Mammary epithelial cell (primary cell): ENCODE measurements at regions of chr10 and their contacts with region 1.

Region 1: GRCh38 chr10:6445501-6446316 is 134.4 kb downstream of the PRKCQ start:
- DNase-seq: peak; percentile 36
- H3K4me3 ChIP-seq: no peak overlapping the region
- H3K27ac ChIP-seq: no peak overlapping the region
- H3K4me1 ChIP-seq: no peaks in the 10 kb centered on the region
- H3K27me3 ChIP-seq: no peaks in the 10 kb centered on the region
- CTCF ChIP-seq: peak; percentile 55 to 61

Region 2: GRCh38 chr10:6493521-6494441 is 48.1 kb after region 1 on chr10:
- CTCF ChIA-PET with region 1: no interaction called
- dilution Hi-C with region 1: no loop called
- in situ Hi-C with region 1: no loop called
- intact Hi-C with region 1: loop called (anchors 5 kb)
- DNase-seq: peak; percentile 89
- H3K4me3 ChIP-seq: no peak overlapping the region
- H3K27ac ChIP-seq: peak overlapping the region; percentile 80
- H3K4me1 ChIP-seq: peaks cover 42% of the 10 kb centered on the region
- H3K27me3 ChIP-seq: no peaks in the 10 kb centered on the region
- CTCF ChIP-seq: no peak

Region 3: GRCh38 chr10:6647811-6648526 is 202.3 kb after region 1 on chr10:
- CTCF ChIA-PET with region 1: no interaction called
- dilution Hi-C with region 1: no loop called
- in situ Hi-C with region 1: no loop called
- intact Hi-C with region 1: loop called (anchors 1 kb)
- DNase-seq: peak; percentile 43
- H3K4me3 ChIP-seq: no peak overlapping the region
- H3K27ac ChIP-seq: no peak overlapping the region
- H3K4me1 ChIP-seq: no peaks in the 10 kb centered on the region
- H3K27me3 ChIP-seq: no peaks in the 10 kb centered on the region
- CTCF ChIP-seq: peak; percentile 81 to 93